H1 (cell line): ENCODE measurements at regions of chr15 and their contacts with region 1.

Region 1: DNA sequence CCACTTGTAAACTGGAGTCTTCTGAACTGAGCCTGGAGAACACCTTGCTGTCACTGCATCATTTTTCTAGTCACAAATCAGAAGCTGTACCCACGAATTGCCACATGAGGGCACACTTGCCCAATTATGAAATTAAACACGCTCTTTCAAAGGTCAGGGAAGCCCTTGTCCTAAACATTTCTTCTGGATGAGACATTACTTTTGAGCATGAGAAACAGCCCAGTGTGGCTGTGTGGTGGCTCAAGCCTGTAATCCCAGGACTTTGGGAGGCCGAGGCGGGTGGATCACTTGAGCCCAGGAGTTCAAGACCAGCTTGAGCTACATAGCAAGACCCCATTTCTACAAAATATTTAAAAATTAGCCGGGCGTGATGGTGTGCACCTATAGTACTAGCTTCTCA is 27.5 kb upstream of the CFAP161 start:
- DNase-seq: peak; percentile 9 to 56
- H3K4me3 ChIP-seq: no peak overlapping the region
- H3K27ac ChIP-seq: no peak overlapping the region
- H3K4me1 ChIP-seq: no peaks in the 10 kb centered on the region
- H3K27me3 ChIP-seq: no peaks in the 10 kb centered on the region
- CTCF ChIP-seq: peak in 2 of 3 experiments; percentile 70 to 79; a peak in 3 of 4 replicates
- EP300 ChIP-seq: no peak
- POLR2A ChIP-seq: no peak
- RAD21 ChIP-seq: peak; percentile 83 to 85

Region 2: DNA sequence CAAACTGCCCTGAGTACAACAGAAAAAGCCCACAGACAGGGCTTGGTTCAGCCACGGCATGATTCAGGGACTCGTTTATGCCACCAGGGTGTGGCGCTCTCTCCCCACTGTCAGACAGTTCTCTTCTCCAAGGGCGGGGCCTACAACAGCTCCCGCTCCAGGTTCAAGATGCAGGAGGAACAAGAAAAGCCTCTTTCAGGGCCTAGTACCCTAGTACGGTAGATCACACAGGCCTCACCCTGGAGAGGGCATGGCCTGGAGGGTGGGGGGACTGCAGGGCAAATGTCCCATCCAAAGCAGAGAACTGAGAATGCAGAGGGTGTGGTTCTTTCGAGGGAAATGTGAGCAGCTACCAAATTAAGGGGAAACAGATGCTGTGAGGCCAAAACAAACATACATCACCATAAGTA is 128.9 kb before region 1 on chr15:
- CTCF ChIA-PET with region 1: interaction called, 12 read pairs
- POLR2A ChIA-PET with region 1: no interaction called
- DNase-seq: peak in 1 of 2 experiments; percentile 79
- H3K4me3 ChIP-seq: no peak overlapping the region
- H3K27ac ChIP-seq: no peak overlapping the region
- H3K4me1 ChIP-seq: peaks cover 0 to 9% (median 3%) of the 10 kb centered on the region in 4 experiments; a peak in 3 of 7 replicates
- H3K27me3 ChIP-seq: no peaks in the 10 kb centered on the region
- CTCF ChIP-seq: peak; percentile 82 to 84 (median 83)
- EP300 ChIP-seq: no peak
- POLR2A ChIP-seq: no peak
- RAD21 ChIP-seq: peak; percentile 81 to 88

Region 3: DNA sequence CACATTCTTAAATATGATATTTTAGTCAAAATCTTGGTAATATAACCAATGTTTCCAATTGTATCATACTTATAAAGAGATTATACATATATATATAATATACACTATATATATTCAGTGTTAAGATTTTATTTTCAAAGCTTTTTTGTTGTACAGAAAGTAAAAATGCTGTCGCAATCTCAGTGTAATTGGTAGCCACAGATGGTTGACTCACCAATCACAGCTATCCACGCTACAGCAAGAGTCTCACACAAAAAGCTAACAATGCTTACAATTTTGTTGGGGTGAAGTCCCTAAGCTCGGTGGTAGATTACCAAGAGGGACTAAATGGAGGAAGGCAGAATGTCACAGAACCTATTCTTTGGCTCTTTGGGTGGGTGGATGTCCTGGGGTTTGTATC is 10.6 kb after region 1 on chr15:
- CTCF ChIA-PET with region 1: interaction called, 40 read pairs
- POLR2A ChIA-PET with region 1: no interaction called
- DNase-seq: no peak
- H3K4me3 ChIP-seq: no peak overlapping the region
- H3K27ac ChIP-seq: no peak overlapping the region
- H3K4me1 ChIP-seq: peaks cover 1 to 5% (median 3%) of the 10 kb centered on the region in 4 experiments; a peak in 4 of 7 replicates
- H3K27me3 ChIP-seq: peaks cover 0 to 3% (median 0%) of the 10 kb centered on the region in 4 experiments; a peak in 1 of 7 replicates
- CTCF ChIP-seq: no peak
- EP300 ChIP-seq: no peak
- POLR2A ChIP-seq: no peak
- RAD21 ChIP-seq: no peak

Region 4: GRCh38 chr15:81163961-81164800 is 57.6 kb after region 1 on chr15:
- CTCF ChIA-PET with region 1: interaction called, 23 read pairs
- POLR2A ChIA-PET with region 1: no interaction called
- DNase-seq: no peak
- H3K4me3 ChIP-seq: no peak overlapping the region
- H3K27ac ChIP-seq: no peak overlapping the region
- H3K4me1 ChIP-seq: no peaks in the 10 kb centered on the region
- H3K27me3 ChIP-seq: no peaks in the 10 kb centered on the region
- CTCF ChIP-seq: peak; percentile 19 to 25 (median 25); a peak in 2 of 4 replicates
- EP300 ChIP-seq: no peak
- POLR2A ChIP-seq: no peak
- RAD21 ChIP-seq: peak; percentile 27 to 42; a peak in 3 of 4 replicates

Region 5: DNA sequence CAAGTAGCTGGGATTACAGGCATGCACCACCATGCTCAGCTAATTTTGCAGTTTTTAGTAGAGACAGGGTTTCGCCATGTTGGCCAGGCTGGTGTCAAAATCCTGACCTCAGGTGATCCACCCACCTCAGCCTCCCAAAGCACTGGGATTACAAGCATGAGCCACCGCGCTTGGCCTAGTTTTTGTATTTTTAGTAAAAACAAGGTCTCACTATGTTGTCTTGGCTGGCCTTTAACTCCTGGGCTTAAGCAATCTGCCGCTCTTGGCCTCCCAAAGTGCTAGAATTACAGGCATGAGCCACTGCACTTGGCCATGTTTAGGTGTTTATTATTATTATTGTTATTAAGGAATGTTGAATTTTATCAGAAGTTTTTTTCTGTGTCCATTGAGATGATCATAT is 104.8 kb after region 1 on chr15:
- CTCF ChIA-PET with region 1: no interaction called
- POLR2A ChIA-PET with region 1: no interaction called
- DNase-seq: no peak
- H3K4me3 ChIP-seq: no peak overlapping the region
- H3K27ac ChIP-seq: no peak overlapping the region
- H3K4me1 ChIP-seq: no peaks in the 10 kb centered on the region
- H3K27me3 ChIP-seq: no peaks in the 10 kb centered on the region
- CTCF ChIP-seq: no peak
- EP300 ChIP-seq: no peak
- POLR2A ChIP-seq: no peak
- RAD21 ChIP-seq: no peak

Region 6: DNA sequence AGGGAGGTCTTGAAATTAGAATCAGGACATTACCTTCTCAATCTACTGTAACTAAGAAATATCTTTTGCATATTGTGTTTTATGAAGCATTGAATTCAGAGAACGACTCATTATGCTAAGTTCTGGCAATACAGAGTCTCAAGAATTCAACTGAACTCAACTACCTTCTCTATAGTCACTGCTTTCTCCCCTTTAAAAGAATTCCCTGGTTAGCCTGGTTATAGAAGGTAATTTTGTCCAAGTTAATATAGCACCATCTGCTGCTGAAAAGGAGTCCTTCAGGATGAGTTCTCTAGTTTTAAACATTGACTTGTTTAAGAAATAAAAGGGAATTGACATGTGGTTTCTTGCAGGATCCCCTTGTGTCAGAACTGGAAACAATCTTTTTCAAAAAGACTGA is 150.4 kb after region 1 on chr15:
- CTCF ChIA-PET with region 1: interaction called, 262 read pairs
- POLR2A ChIA-PET with region 1: no interaction called
- DNase-seq: no peak
- H3K4me3 ChIP-seq: no peak overlapping the region
- H3K27ac ChIP-seq: no peak overlapping the region
- H3K4me1 ChIP-seq: no peaks in the 10 kb centered on the region
- H3K27me3 ChIP-seq: no peaks in the 10 kb centered on the region
- CTCF ChIP-seq: peak in 2 of 3 experiments; percentile 37 to 43; a peak in 2 of 4 replicates
- EP300 ChIP-seq: no peak
- POLR2A ChIP-seq: no peak
- RAD21 ChIP-seq: peak; percentile 55